ENCODE measurements at regions of chr2 and their contacts with region 1.

Region 1: DNA sequence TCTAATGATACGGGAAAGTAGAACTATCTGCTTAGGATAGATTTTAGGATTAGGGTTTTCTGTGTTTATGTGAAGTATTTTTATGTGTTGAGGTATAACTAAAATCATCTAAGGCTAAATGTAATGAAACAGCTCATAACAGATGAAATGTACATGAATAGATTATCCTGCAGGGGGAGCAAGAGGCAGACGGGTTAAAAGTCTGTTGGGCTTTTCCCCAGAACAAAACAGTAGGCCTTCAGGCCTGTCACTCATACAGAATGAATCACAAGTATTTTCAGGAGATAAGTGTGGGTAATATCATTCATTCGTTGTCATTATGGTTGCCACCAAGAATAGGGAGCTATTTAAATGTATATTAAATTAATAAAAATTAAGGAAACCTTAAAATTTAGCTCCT is 107.9 kb upstream of the IL1R2 start:
- DNase-seq: peak; percentile 80
- ATAC-seq: peak; percentile 67
- H3K4me3 ChIP-seq: no peak overlapping the region
- H3K27ac ChIP-seq: no peak overlapping the region
- H3K4me1 ChIP-seq: peaks cover 13% of the 10 kb centered on the region
- H3K27me3 ChIP-seq: no peaks in the 10 kb centered on the region
- CTCF ChIP-seq: peak; percentile 81

Region 2: DNA sequence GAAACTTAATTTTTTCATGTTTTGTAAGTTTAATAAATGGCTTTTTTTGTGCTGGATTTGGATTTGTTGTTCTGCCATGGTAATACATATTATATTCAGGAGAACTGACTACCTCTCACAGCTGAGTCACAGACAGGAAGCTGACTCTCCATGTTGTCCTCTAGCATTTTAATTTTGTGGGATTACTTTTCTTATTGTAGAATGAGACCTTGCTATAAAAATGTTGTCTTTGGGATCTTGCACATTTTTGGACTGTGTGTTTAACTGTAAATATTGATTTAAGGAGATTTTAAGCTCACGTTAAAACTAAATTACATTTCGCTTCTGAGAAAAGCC is 137.5 kb before region 1 on chr2:
- CTCF ChIA-PET with region 1: no interaction called
- POLR2A ChIA-PET with region 1: interaction called, 11 read pairs
- intact Hi-C with region 1: no loop called
- DNase-seq: peak; percentile 88
- ATAC-seq: peak; percentile 92
- H3K4me3 ChIP-seq: peak overlapping the region; percentile 49
- H3K27ac ChIP-seq: peak overlapping the region; percentile 98
- H3K4me1 ChIP-seq: peaks cover 57% of the 10 kb centered on the region
- H3K27me3 ChIP-seq: no peaks in the 10 kb centered on the region
- CTCF ChIP-seq: no peak

Region 3: DNA sequence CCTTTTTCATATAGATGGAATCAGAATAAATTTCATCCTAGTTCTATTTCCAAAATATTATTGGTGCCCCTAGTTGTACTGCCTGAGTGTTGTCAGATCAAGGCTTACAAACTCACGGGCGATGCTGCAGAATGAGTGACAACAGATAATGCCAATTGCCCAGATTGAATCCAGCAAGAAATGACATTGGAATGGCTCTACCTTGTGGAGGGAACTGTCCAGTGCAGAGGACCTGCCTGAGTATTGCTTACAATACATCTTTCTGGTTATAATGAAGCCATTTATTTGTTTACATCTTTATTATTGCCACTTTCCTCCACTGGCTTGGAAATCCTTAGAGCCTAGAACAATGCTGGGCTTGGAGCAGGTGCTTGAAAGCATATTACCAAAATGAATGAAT is 100.1 kb after region 1 on chr2:
- CTCF ChIA-PET with region 1: no interaction called
- POLR2A ChIA-PET with region 1: no interaction called
- intact Hi-C with region 1: loop called (anchors 1 kb)
- DNase-seq: peak; percentile 61
- ATAC-seq: peak; percentile 44
- H3K4me3 ChIP-seq: 0 out of 2 replicates have a peak overlapping the region, but pooled peaks have one; percentile 12
- H3K27ac ChIP-seq: peak overlapping the region; percentile 98
- H3K4me1 ChIP-seq: peaks cover 47% of the 10 kb centered on the region
- H3K27me3 ChIP-seq: no peaks in the 10 kb centered on the region
- CTCF ChIP-seq: peak; percentile 70

Region 4: GRCh38 chr2:102166189-102166845 is 282.5 kb after region 1 on chr2:
- CTCF ChIA-PET with region 1: interaction called, 3 read pairs
- POLR2A ChIA-PET with region 1: no interaction called
- intact Hi-C with region 1: loop called (anchors 5 kb)
- DNase-seq: peak; percentile 65
- ATAC-seq: peak; percentile 96
- H3K4me3 ChIP-seq: no peak overlapping the region
- H3K27ac ChIP-seq: 0 out of 2 replicates have a peak overlapping the region, but pooled peaks have one; percentile 6
- H3K4me1 ChIP-seq: peaks cover 15% of the 10 kb centered on the region
- H3K27me3 ChIP-seq: no peaks in the 10 kb centered on the region
- CTCF ChIP-seq: peak; percentile 79

Region 5: GRCh38 chr2:102240640-102241370 is 356.9 kb after region 1 on chr2:
- CTCF ChIA-PET with region 1: interaction called, 7 read pairs
- POLR2A ChIA-PET with region 1: no interaction called
- intact Hi-C with region 1: loop called (anchors 5 kb)
- DNase-seq: peak; percentile 91
- ATAC-seq: peak; percentile 97
- H3K4me3 ChIP-seq: no peak overlapping the region
- H3K27ac ChIP-seq: peak overlapping the region; percentile 54
- H3K4me1 ChIP-seq: peaks cover 19% of the 10 kb centered on the region
- H3K27me3 ChIP-seq: no peaks in the 10 kb centered on the region
- CTCF ChIP-seq: peak; percentile 97

Region 6: GRCh38 chr2:102449370-102449974 is 565.6 kb after region 1 on chr2:
- CTCF ChIA-PET with region 1: no interaction called
- POLR2A ChIA-PET with region 1: no interaction called
- intact Hi-C with region 1: loop called (anchors 5 kb)
- DNase-seq: peak; percentile 65
- ATAC-seq: peak; percentile 55
- H3K4me3 ChIP-seq: no peak overlapping the region
- H3K27ac ChIP-seq: no peak overlapping the region
- H3K4me1 ChIP-seq: no peaks in the 10 kb centered on the region
- H3K27me3 ChIP-seq: 0 out of 2 replicates have a peak, but pooled peaks cover 1% of the 10 kb centered on the region
- CTCF ChIP-seq: peak; percentile 89

Measured in PC-3 (cell line).